A549 (cell line): ENCODE measurements at regions of chr1 and their contacts with region 1.

Region 1: DNA sequence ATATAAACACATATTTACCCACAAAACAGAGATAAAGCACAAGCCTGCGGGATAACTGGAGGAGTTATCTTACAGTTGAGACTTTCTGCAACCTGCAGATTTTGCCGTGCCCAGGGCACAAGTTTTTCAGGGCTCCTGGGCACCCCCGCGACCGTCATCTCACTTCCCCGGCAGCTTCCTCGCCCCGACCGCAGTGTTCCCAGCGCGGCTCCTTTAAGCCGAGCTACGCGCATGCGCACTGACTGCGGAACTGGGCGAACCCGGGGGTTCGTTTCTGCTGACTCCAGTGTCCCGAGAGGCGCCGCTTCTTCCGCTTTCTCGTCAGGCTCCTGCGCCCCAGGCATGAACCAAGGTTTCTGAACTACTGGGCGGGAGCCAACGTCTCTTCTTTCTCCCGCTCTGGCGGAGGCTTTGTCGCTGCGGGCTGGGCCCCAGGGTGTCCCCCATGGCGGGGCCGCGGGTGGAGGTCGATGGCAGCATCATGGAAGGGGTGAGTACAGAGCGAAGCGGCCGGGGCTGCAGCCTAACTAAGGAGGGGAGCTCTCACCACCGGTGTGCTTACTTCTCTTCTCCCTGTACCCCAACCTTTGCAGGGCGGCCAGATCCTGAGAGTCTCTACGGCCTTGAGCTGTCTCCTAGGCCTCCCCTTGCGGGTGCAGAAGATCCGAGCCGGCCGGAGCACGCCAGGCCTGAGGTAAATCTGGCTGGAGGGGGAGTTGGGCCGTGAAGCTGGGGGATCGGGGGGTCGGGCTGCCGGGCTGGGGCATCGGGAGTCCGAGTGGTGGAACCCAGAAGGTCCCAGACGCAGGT is at the start of gene RTCA:
- DNase-seq: peak; percentile 74 to 89
- ATAC-seq: peak; percentile 99
- H3K4me3 ChIP-seq: peak within 1 kb of the TSS; percentile 88
- H3K27ac ChIP-seq: peak within 1 kb of the TSS; percentile 92 to 98
- H3K4me1 ChIP-seq: peaks cover 14% of the 10 kb centered on the region; the same call in 1 of the 3 replicates
- CTCF ChIP-seq: no peak
- EP300 ChIP-seq: no peak
- POLR2A ChIP-seq: peak; percentile 72
- RAD21 ChIP-seq: no peak
- polyA plus RNA-seq, gene RTCA: 31.9 and 39.5 TPM in 2 replicates

Region 2: DNA sequence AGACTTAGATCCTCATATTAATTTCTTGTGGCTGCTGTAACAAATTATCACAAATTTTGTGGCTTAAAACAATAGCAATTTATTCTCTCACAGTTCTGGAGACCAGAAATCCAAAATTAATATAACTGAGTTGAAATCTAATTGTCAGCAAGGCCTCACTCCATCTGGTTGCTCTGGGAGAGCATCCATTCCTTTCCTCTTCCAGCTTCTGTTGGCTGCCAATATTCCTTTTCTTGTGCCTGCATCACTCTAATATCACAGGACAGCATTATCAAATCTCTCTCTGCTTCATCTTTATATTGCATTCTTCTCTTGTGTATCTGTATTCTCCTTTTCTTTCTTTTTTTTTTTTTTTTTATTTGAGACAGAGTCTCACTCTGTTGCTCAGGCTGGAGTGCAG is 287.0 kb before region 1 on chr1:
- CTCF ChIA-PET with region 1: no interaction called
- POLR2A ChIA-PET with region 1: no interaction called
- DNase-seq: no peak
- ATAC-seq: no peak
- H3K4me3 ChIP-seq: no peak overlapping the region
- H3K27ac ChIP-seq: no peak overlapping the region
- H3K4me1 ChIP-seq: no peaks in the 10 kb centered on the region
- CTCF ChIP-seq: no peak
- EP300 ChIP-seq: no peak
- POLR2A ChIP-seq: no peak
- RAD21 ChIP-seq: no peak

Region 3: DNA sequence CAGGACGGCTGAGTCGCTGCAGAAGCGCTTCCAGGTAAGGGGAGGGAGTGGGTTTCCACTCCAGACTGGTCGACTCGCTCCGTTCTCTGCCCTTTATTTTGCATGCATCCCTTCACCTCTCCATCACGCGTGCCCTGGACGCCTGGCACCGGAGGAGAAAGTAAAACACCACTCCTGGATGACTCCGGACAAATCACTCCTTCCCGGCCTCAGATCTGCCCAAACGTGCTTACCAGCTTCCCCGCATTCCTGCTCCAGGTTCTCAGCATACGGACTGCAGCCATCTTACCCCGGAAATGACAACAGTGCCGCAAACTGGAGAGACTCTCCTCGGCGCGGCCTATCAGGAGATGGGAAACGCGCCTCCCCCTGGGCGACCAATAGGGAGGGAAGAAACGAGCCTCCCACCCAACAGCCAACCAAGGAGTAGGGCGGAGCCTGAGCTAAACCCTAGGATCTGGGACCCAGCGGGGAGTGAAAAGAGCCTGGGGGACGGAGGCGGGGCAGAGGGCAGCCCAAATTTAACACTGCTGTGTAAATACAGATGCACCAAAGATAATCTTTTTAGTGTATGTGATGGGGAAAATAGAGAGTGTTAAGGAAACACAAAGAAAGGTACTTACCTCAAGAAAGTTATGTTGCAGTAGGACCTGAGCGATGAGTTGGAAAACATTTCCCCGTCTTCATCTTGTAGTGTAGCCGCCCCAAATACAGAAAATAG is 16.4 kb before region 1 on chr1 and contains the start of gene DBT:
- CTCF ChIA-PET with region 1: no interaction called
- POLR2A ChIA-PET with region 1: interaction called, 18 read pairs
- DNase-seq: peak; percentile 90 to 96
- ATAC-seq: peak; percentile 100
- H3K4me3 ChIP-seq: peak within 1 kb of the TSS; percentile 93
- H3K27ac ChIP-seq: peak within 1 kb of the TSS; percentile 73 to 93
- H3K4me1 ChIP-seq: peaks cover 8% of the 10 kb centered on the region; the same call in 1 of the 3 replicates
- CTCF ChIP-seq: no peak
- EP300 ChIP-seq: no peak
- POLR2A ChIP-seq: peak; percentile 85
- RAD21 ChIP-seq: no peak
- polyA plus RNA-seq, gene DBT: 7.0 and 8.7 TPM in 2 replicates

Region 4: GRCh38 chr1:100351095-100351891 is 85.2 kb after region 1 on chr1:
- CTCF ChIA-PET with region 1: interaction called, 3 read pairs
- POLR2A ChIA-PET with region 1: interaction called, 10 read pairs
- DNase-seq: peak; percentile 77 to 95
- ATAC-seq: peak; percentile 88 to 89
- H3K4me3 ChIP-seq: peak overlapping the region; percentile 92
- H3K27ac ChIP-seq: peak overlapping the region; percentile 92 to 94
- H3K4me1 ChIP-seq: peaks cover 25% of the 10 kb centered on the region
- CTCF ChIP-seq: peak; percentile 42; the same call in 2 of the 3 replicates
- EP300 ChIP-seq: no peak
- POLR2A ChIP-seq: peak; percentile 45
- RAD21 ChIP-seq: peak in 1 of 2 experiments; percentile 25; a peak in 3 of 5 replicates